ENCODE measurements at regions of chr6 and their contacts with region 1.

Region 1: DNA sequence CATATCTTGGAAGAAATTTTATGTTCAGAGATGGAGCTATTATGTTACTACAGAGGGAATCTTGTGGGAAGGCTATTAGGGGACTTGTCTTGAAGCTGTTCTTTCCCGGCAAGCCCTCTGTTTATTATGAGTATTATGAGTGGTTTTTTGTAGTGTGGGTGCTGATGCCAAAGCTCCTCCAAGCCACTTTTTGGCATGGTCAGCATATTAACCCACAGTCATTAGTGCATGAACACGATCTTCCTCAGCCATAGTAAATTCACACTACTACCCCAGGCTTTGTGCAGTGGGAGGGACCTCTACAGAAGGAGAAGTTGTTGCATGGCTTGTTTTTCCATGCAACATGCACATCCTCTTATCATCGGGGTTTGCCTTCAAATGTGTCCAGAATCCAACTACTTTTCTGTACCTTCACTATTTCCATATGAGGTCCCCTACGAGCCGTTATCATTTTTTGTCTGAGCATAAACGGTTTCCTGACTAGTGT is 6.5 kb upstream of the BMP6 start:
- DNase-seq: no peak
- H3K4me3 Mint-ChIP-seq: no peak overlapping the region
- H3K27ac Mint-ChIP-seq: no peak overlapping the region
- H3K4me1 Mint-ChIP-seq: peaks cover 3% of the 10 kb centered on the region
- H3K27me3 Mint-ChIP-seq: peaks cover 35% of the 10 kb centered on the region

Region 2: GRCh38 chr6:7468382-7469081 is 250.9 kb before region 1 on chr6:
- intact Hi-C with region 1: no loop called
- DNase-seq: no peak
- H3K4me3 Mint-ChIP-seq: no peak overlapping the region
- H3K27ac Mint-ChIP-seq: no peak overlapping the region
- H3K4me1 Mint-ChIP-seq: peaks cover 2% of the 10 kb centered on the region
- H3K27me3 Mint-ChIP-seq: peaks cover 2% of the 10 kb centered on the region

Region 3: DNA sequence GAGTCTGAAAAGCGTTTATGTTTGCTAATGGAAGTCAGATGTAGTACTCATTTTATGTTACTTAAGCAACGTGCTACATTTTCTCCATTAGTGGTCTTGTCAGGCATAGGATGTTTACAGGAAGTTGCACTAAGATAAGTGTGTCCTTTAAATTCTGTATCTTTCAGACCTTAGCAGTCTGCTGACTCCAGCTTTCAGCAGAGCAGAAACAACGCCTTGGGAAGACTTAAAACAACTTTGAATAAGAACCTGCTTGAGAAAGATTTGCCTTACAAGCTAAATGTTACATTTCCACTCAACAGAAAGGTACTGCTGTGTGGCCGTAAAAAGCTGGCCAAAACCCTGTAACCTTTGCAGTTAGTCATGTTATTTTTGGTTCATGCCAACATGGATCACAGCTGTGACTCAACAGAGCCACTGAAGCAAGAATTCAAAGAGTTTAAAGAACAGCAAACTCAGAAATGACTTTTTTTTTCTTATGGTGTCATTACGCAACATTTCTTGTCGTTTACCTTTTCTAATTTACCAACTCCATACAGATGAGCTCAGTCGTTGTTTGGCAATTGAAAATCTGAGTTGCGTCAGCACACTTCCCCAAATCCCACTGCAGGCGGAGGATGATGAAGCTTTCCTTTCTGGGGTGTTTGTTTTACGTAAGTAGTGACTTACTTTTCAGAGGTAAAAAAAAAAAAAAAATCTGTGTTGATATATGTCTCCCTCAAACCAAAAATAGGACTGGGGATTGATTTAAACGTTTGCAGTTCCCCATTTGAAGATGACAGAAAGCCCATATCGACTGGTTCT is 21.4 kb before region 1 on chr6:
- intact Hi-C with region 1: loop called (anchors 2 kb)
- DNase-seq: no peak
- H3K4me3 Mint-ChIP-seq: peak overlapping the region; percentile 4
- H3K27ac Mint-ChIP-seq: peak overlapping the region; percentile 81
- H3K4me1 Mint-ChIP-seq: peaks cover 12% of the 10 kb centered on the region
- H3K27me3 Mint-ChIP-seq: no peaks in the 10 kb centered on the region